CD8-positive, alpha-beta memory T cell (primary cell): ENCODE measurements at regions of chr9 and their contacts with region 1.

Region 1: DNA sequence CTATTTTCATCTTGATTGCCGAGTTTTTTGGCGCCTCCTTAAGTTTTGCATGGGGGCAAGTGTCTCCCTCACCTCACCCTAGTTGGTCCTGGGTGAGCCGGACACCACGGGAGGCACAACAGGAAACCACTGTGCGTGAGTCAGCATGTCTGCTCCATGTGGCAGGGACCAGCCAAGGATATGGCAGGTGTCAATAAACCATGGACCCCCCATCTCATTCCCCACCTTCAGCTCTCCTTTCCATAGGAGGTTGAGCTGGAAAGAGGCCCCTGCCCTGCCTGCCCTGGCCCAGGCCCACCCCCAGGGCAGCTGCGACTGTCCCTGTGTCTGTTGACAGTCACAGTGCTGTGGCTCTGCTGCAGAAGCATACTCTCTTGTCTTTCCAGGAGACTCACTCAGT is 3.1 kb downstream of the SPACA9 start:
- DNase-seq: peak in 1 of 5 donors; percentile 12
- H3K4me3 ChIP-seq: no peak overlapping the region
- H3K4me3 Mint-ChIP-seq: peak overlapping the region in 1 of 7 donors; percentile 65
- H3K27ac ChIP-seq: no peak overlapping the region
- H3K27ac Mint-ChIP-seq: peak overlapping the region in 1 of 8 donors; percentile 32
- H3K4me1 ChIP-seq: peaks cover 5% of the 10 kb centered on the region
- H3K4me1 Mint-ChIP-seq: peaks cover 14 to 26% (median 16%) of the 10 kb centered on the region in 3 donors
- H3K27me3 ChIP-seq: no peaks in the 10 kb centered on the region
- H3K27me3 Mint-ChIP-seq: no peaks in the 10 kb centered on the region

Region 2: DNA sequence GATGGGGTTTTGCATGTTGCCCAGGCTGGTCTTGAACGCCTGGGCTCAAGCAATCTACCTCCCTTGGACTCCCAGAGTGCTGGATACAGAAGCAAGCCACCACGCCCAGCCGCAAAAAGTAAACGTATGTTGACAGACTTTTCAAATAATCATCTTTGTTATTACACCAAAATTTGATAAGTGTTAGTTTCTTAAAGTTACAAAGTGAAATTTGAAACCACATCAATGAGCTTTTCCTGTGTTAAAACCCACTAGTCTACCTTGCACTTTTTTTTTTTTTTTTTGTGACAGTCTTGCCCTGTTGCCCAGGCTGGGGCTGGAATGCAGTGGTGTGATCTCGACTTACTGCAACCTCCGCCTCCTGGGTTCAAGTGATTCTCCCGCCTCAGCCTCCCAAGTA is 26.8 kb after region 1 on chr9:
- CTCF ChIA-PET with region 1: no interaction called
- POLR2A ChIA-PET with region 1: interaction called, 10 read pairs
- DNase-seq: peak; percentile 8 to 75 (median 34)
- H3K4me3 ChIP-seq: no peak overlapping the region
- H3K4me3 Mint-ChIP-seq: peak overlapping the region; percentile 61 to 79 (median 78)
- H3K27ac ChIP-seq: peak overlapping the region; percentile 2
- H3K27ac Mint-ChIP-seq: peak overlapping the region; percentile 44 to 95 (median 90)
- H3K4me1 ChIP-seq: peaks cover 13% of the 10 kb centered on the region
- H3K4me1 Mint-ChIP-seq: peaks cover 16 to 20% (median 17%) of the 10 kb centered on the region in 3 donors
- H3K27me3 ChIP-seq: no peaks in the 10 kb centered on the region
- H3K27me3 Mint-ChIP-seq: peaks cover 0 to 5% of the 10 kb centered on the region in 2 donors